ENCODE measurements at regions of chr5 and their contacts with region 1.

Region 1: DNA sequence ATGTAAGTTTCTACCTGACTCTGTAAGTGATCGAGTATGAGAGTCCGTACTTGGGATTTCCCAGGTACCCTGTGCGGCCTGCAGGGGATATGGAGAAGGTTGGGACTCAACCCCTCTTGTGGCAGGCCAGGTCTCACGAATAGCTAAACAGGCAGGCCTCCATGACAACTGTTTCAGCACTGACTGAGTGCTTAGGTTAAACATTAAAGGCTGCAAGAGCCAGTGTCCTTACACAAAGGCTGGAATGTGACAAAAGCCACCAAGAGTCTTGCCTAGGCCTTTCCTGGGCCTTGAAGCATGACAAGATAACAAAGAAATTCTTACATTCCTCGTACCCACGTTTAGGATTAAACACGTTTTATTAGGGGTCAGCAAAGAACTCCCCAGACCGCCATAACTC is 58.6 kb downstream of the THBS4 start:
- DNase-seq: no peak
- ATAC-seq: no peak
- H3K4me3 ChIP-seq: no peak overlapping the region
- H3K27ac ChIP-seq: peak overlapping the region in 2 of 12 donors; percentile 35 to 47
- H3K4me1 ChIP-seq: peaks cover 0 to 11% (median 3%) of the 10 kb centered on the region in 12 donors
- H3K27me3 ChIP-seq: no peaks in the 10 kb centered on the region
- CTCF ChIP-seq: no peak
- POLR2A ChIP-seq: no peak

Region 2: GRCh38 chr5:80141147-80141671 is 47.4 kb after region 1 on chr5:
- intact Hi-C with region 1: loop called in 1 of 10 experiments (anchors 5 kb)
- DNase-seq: peak; percentile 87 to 93 (median 91)
- ATAC-seq: peak; percentile 85 to 98 (median 96)
- H3K4me3 ChIP-seq: no peak overlapping the region
- H3K27ac ChIP-seq: peak overlapping the region; percentile 64 to 94 (median 84)
- H3K4me1 ChIP-seq: peaks cover 3 to 87% (median 22%) of the 10 kb centered on the region in 12 donors
- H3K27me3 ChIP-seq: no peaks in the 10 kb centered on the region
- CTCF ChIP-seq: peak in 2 of 12 donors; percentile 8 to 30
- POLR2A ChIP-seq: peak in 1 of 2 donors; percentile 26

Region 3: GRCh38 chr5:80269991-80270438 is 176.2 kb after region 1 on chr5:
- intact Hi-C with region 1: loop called (anchors 1 to 10 kb)
- DNase-seq: no peak
- ATAC-seq: no peak
- H3K4me3 ChIP-seq: no peak overlapping the region
- H3K27ac ChIP-seq: no peak overlapping the region
- H3K4me1 ChIP-seq: peaks cover 0 to 6% (median 0%) of the 10 kb centered on the region in 12 donors
- H3K27me3 ChIP-seq: no peaks in the 10 kb centered on the region
- CTCF ChIP-seq: no peak
- POLR2A ChIP-seq: no peak

Region 4: GRCh38 chr5:80308526-80308925 is 214.7 kb after region 1 on chr5:
- intact Hi-C with region 1: loop called (anchors 1 to 5 kb)
- DNase-seq: no peak
- ATAC-seq: no peak
- H3K4me3 ChIP-seq: no peak overlapping the region
- H3K27ac ChIP-seq: no peak overlapping the region
- H3K4me1 ChIP-seq: no peaks in the 10 kb centered on the region
- H3K27me3 ChIP-seq: no peaks in the 10 kb centered on the region
- CTCF ChIP-seq: no peak
- POLR2A ChIP-seq: no peak

Region 5: GRCh38 chr5:80672140-80672736 is 578.4 kb after region 1 on chr5:
- intact Hi-C with region 1: loop called in 1 of 10 experiments (anchors 10 kb)
- DNase-seq: peak; percentile 54 to 80 (median 58)
- ATAC-seq: peak in 3 of 4 donors; percentile 54 to 59 (median 55)
- H3K4me3 ChIP-seq: no peak overlapping the region
- H3K27ac ChIP-seq: no peak overlapping the region
- H3K4me1 ChIP-seq: peaks cover 0 to 8% (median 0%) of the 10 kb centered on the region in 12 donors
- H3K27me3 ChIP-seq: no peaks in the 10 kb centered on the region
- CTCF ChIP-seq: peak; percentile 65 to 88 (median 80)
- POLR2A ChIP-seq: no peak

Measured in heart left ventricle (tissue), 16 donors.